ENCODE measurements at regions of chr19 and their contacts with region 1.

Region 1: DNA sequence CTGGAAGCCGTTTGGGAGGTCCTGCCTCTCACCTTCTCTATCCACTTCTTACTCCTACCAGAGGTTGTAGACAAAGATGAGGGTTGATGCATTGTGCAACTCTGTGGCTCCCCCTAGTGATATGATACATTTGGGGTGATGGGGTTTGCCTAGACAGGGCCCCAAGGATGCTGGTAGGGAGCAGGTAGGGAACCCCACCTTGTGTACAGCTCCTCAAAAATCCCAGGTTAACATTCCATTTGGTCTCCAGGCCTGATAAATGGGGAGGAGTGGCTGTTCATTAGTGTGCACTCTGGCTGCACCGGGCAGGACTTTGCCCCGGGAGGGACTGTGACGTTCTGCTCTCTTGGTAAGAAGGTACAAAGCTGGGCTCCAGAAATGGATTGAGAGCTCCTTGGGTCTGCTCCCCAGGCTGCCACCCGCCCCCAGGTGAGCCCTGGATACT is 19.2 kb downstream of the SIGLEC8 start:
- DNase-seq: peak; percentile 46
- ATAC-seq: peak; percentile 25
- H3K4me3 ChIP-seq: no peak overlapping the region
- H3K27ac ChIP-seq: no peak overlapping the region
- H3K4me1 ChIP-seq: peaks cover 17% of the 10 kb centered on the region
- H3K27me3 ChIP-seq: peaks cover 72% of the 10 kb centered on the region
- CTCF ChIP-seq: peak; percentile 74

Region 2: GRCh38 chr19:51393959-51394836 is 44.8 kb before region 1 on chr19:
- CTCF ChIA-PET with region 1: interaction called, 3 read pairs
- POLR2A ChIA-PET with region 1: no interaction called
- intact Hi-C with region 1: loop called (anchors 2 kb)
- DNase-seq: peak; percentile 100
- ATAC-seq: peak; percentile 93
- H3K4me3 ChIP-seq: peak overlapping the region; percentile 66
- H3K27ac ChIP-seq: peak overlapping the region; percentile 68
- H3K4me1 ChIP-seq: peaks cover 18% of the 10 kb centered on the region
- H3K27me3 ChIP-seq: no peaks in the 10 kb centered on the region
- CTCF ChIP-seq: peak; percentile 59

Region 3: GRCh38 chr19:51422053-51422448 is 17.0 kb before region 1 on chr19:
- CTCF ChIA-PET with region 1: no interaction called
- POLR2A ChIA-PET with region 1: no interaction called
- intact Hi-C with region 1: loop called (anchors 2 kb)
- DNase-seq: peak; percentile 96
- ATAC-seq: peak; percentile 92
- H3K4me3 ChIP-seq: no peak overlapping the region
- H3K27ac ChIP-seq: no peak overlapping the region
- H3K4me1 ChIP-seq: no peaks in the 10 kb centered on the region
- H3K27me3 ChIP-seq: peaks cover 40% of the 10 kb centered on the region
- CTCF ChIP-seq: peak; percentile 97

Region 4: DNA sequence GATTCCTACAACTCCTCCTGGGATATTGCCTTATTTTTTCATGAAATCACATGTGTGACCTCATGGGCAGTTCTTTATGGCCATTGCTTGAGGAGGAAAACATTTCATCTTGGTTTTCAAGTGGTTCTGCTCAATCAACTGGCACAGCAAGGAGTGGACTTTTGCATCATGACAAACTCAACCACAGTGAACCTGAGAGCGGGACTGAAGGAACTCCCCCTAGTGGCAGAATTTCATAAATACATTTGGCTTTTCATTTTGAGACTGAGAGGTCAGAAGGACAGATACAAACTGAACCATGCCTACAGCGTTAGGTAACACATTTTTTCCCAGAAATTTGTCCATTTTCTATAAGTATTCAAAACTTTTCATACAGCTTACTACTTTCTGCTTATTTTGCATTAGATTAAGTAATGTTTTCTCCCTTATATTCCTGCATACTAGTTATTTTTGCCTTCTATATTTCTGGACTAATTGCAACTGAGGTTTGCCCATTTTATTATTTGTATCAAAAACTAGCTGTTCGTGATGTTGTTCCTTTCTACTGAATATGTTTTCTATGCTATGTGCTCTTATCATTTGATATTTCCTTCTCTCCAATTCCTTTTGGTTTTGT is 75.9 kb after region 1 on chr19:
- CTCF ChIA-PET with region 1: no interaction called
- POLR2A ChIA-PET with region 1: no interaction called
- intact Hi-C with region 1: loop called (anchors 10 kb)
- DNase-seq: peak; percentile 89
- ATAC-seq: peak; percentile 84
- H3K4me3 ChIP-seq: no peak overlapping the region
- H3K27ac ChIP-seq: no peak overlapping the region
- H3K4me1 ChIP-seq: no peaks in the 10 kb centered on the region
- H3K27me3 ChIP-seq: peaks cover 36% of the 10 kb centered on the region; the same call in 1 of the 2 replicates
- CTCF ChIP-seq: peak; percentile 93